PC-9 (cell line): ENCODE measurements at regions of chr3 and their contacts with region 1.

Region 1: GRCh38 chr3:126752303-126752842 is 48.3 kb downstream of the CHCHD6 start:
- DNase-seq: peak; percentile 44 to 88
- H3K4me3 ChIP-seq: no peak overlapping the region
- H3K27ac ChIP-seq: no peak overlapping the region
- H3K4me1 ChIP-seq: peaks cover 10% of the 10 kb centered on the region
- H3K27me3 ChIP-seq: no peaks in the 10 kb centered on the region
- CTCF ChIP-seq: peak; percentile 93

Region 2: GRCh38 chr3:126679318-126679751 is 73.0 kb before region 1 on chr3:
- CTCF ChIA-PET with region 1: no interaction called
- POLR2A ChIA-PET with region 1: no interaction called
- intact Hi-C with region 1: loop called (anchors 2 kb)
- DNase-seq: peak; percentile 59 to 88
- H3K4me3 ChIP-seq: no peak overlapping the region
- H3K27ac ChIP-seq: no peak overlapping the region
- H3K4me1 ChIP-seq: no peaks in the 10 kb centered on the region
- H3K27me3 ChIP-seq: peaks cover 12% of the 10 kb centered on the region
- CTCF ChIP-seq: peak; percentile 97

Region 3: GRCh38 chr3:126835898-126836860 is 83.8 kb after region 1 on chr3:
- CTCF ChIA-PET with region 1: interaction called, 5 read pairs
- POLR2A ChIA-PET with region 1: interaction called, 8 read pairs
- intact Hi-C with region 1: loop called (anchors 1 kb)
- DNase-seq: peak in 1 of 2 experiments; percentile 18
- H3K4me3 ChIP-seq: no peak overlapping the region; the same call in 1 of the 2 replicates
- H3K27ac ChIP-seq: peak overlapping the region; percentile 62
- H3K4me1 ChIP-seq: peaks cover 23% of the 10 kb centered on the region
- H3K27me3 ChIP-seq: no peaks in the 10 kb centered on the region
- CTCF ChIP-seq: no peak; the same call in 1 of the 2 replicates

Region 4: GRCh38 chr3:126961191-126961790 is 208.9 kb after region 1 on chr3:
- CTCF ChIA-PET with region 1: interaction called, 20 read pairs
- POLR2A ChIA-PET with region 1: no interaction called
- intact Hi-C with region 1: loop called (anchors 1 kb)
- DNase-seq: peak; percentile 41 to 68
- H3K4me3 ChIP-seq: no peak overlapping the region
- H3K27ac ChIP-seq: peak overlapping the region; percentile 35
- H3K4me1 ChIP-seq: peaks cover 49% of the 10 kb centered on the region
- H3K27me3 ChIP-seq: no peaks in the 10 kb centered on the region
- CTCF ChIP-seq: no peak

Region 5: DNA sequence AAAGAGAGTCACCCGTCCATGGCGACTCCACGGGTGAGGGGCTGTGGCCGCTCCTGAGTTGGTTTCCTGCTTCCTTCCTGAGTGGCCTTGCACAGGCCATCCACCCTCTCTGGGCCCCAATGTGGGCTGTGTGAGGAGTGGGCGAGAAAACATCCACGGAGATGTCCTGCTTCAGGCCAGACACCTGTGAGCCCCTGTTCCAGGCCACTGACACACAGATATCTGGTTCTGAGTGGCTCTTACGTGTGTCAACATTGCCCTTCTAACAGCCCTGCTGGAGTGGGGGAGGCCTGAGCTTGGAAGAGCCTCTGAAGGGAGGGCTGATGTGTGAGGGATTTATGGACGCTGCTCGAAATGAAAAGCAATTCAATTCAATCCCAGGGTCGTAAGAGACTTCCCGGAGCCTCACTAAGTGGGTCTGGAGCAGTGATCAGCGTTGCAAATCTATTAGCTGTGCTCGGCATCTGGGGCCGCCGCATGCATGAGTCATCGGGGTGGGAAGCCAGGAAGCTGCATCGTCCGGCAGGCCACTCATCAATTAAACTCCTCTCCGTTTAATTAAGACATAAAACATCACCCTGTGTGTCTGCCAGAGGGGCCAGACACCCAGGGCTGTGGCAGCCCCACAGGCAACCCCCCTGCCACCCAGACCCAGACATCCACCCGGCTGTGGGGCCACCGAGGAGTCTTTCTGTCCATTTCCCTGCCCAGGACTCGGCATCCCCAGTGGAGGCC is 420.6 kb after region 1 on chr3:
- CTCF ChIA-PET with region 1: no interaction called
- POLR2A ChIA-PET with region 1: no interaction called
- intact Hi-C with region 1: loop called (anchors 2 kb)
- DNase-seq: peak in 1 of 2 experiments; percentile 31
- H3K4me3 ChIP-seq: no peak overlapping the region
- H3K27ac ChIP-seq: no peak overlapping the region
- H3K4me1 ChIP-seq: no peaks in the 10 kb centered on the region
- H3K27me3 ChIP-seq: peaks cover 48% of the 10 kb centered on the region
- CTCF ChIP-seq: no peak

Region 6: DNA sequence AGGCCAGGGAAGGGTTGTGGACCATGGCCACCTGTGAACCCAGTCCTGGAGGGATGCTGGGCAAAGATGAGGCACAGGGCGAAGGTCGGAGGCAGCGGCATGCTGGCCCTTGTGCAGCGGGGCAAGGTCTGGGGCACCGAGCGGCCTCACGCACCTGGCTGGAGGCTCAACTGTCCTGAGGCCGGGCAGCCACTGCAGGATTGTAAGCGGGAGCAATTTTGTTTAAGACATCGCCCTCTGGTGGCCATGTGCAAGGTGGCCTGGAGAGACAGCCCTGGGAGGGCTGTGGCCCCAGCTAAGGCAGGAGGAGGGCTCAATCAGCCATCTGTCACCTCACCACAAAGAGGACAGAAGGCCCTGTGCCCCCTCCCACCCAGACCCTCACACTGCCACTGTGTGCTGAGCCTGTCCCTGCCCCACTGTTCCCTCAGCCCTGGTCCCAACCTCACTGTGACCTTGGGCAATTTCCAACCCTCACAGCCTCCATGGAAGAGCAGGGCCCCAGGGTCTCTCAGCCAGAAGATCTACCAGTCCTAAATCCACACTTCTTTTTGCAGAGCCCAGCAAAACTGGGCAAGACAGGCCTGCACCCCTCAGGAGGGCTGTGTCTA is 791.9 kb after region 1 on chr3:
- CTCF ChIA-PET with region 1: no interaction called
- POLR2A ChIA-PET with region 1: no interaction called
- intact Hi-C with region 1: loop called (anchors 2 kb)
- DNase-seq: peak; percentile 45 to 80
- H3K4me3 ChIP-seq: no peak overlapping the region
- H3K27ac ChIP-seq: no peak overlapping the region
- H3K4me1 ChIP-seq: peaks cover 4% of the 10 kb centered on the region
- H3K27me3 ChIP-seq: peaks cover 25% of the 10 kb centered on the region
- CTCF ChIP-seq: peak; percentile 85